HEK293T (cell line): ENCODE measurements at regions of chr17 and their contacts with region 1.

Region 1: GRCh38 chr17:39485555-39485954 is 24.3 kb downstream of the CDK12 start:
- DNase-seq: no peak

Region 2: GRCh38 chr17:39461113-39461925 is 24.2 kb before region 1 on chr17 and contains the start of gene CDK12:
- CTCF ChIA-PET with region 1: interaction called, 3 read pairs
- POLR2A ChIA-PET with region 1: interaction called, 20 read pairs
- DNase-seq: peak; percentile 92

Region 3: DNA sequence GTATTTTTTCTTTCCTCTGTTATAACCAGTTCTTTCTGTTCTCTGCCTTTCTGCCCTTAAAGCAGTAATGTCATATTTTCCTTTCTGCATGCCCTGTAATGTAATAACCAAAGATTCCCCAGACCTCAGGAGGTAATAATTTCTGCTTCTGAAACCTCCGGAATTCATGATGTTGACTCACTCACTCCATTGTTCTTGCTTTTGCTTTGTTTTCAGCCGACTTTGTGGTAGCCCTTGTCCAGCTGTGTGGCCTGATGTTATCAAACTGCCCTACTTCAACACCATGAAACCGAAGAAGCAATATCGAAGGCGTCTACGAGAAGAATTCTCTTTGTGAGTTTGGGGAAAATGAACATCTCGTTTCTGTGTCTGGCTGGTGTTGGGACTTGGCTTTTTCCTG is 31.7 kb after region 1 on chr17:
- CTCF ChIA-PET with region 1: no interaction called
- POLR2A ChIA-PET with region 1: no interaction called
- DNase-seq: no peak

Region 4: DNA sequence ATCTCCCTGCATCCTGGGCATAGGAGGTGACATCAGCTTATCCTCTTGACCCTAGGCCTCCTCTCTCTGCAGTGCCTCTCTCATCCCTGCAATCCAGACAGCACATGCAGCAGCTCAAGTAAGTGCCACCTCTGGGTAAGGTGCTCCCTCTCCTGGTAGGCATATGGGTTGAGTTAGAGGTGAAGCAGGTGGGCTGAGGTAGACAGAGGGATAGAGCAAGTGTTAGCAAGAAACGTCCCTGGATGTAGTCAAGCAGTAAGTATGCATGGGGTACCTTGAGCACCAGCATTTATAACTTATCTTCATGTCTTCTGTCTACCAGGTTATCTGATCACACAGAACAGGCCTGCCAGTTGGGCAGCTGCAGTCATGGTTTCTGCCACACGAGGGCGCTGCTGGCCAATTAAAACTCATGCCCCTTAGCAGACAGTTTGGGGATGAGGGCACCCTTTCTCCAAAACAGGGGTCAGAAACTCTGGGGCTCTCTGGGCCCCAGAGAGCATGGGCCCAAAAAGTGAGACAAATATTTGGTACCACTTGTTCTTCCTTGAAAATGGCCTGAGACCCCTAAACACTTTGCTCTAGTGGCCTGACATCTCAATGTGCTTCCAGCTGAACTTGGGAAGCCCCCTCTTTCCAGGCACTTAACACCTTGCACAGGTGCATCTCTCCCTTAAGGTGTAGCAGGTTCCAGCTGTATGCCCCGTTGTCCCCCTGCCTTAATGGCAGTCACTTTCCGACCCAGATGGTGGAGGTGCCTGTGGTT is 62.3 kb after region 1 on chr17:
- CTCF ChIA-PET with region 1: no interaction called
- POLR2A ChIA-PET with region 1: no interaction called
- DNase-seq: peak; percentile 70